Left ventricle myocardium superior (tissue), 1 donor: ENCODE measurements at regions of chr12 and their contacts with region 1.

Region 1: DNA sequence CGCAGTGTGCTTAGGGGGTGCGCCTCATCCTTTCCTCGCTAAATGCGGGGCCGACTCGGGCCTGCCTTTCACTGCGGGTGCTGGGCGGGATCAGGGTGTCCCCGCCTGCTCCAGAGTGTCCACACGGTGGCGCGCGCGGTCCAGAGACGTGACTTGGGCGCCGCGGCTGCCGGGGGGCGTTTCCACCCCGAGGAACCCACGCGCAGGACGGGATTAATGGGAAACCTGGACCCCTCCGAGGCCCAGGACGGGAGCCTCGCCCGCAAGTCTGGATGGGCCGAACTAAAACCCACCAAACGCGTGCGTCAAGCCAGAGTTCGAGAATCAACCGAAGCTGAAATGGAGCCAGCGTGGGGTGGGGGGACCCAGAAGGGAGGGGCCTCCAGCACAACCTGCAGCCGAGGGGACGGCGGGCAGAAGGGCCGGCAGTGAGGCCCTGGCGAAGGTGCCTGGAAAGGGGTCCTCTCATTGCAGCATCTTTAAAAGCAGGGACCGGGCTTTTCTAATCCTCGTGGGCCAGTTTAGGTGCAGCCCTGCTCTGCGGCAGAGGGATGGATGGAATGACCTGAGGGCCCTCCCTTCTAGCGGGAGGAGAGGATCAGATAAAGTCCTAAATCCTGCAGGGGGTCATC is 93.3 kb downstream of the NINJ2 start:
- DNase-seq: peak; percentile 96
- ATAC-seq: peak; percentile 68

Region 2: DNA sequence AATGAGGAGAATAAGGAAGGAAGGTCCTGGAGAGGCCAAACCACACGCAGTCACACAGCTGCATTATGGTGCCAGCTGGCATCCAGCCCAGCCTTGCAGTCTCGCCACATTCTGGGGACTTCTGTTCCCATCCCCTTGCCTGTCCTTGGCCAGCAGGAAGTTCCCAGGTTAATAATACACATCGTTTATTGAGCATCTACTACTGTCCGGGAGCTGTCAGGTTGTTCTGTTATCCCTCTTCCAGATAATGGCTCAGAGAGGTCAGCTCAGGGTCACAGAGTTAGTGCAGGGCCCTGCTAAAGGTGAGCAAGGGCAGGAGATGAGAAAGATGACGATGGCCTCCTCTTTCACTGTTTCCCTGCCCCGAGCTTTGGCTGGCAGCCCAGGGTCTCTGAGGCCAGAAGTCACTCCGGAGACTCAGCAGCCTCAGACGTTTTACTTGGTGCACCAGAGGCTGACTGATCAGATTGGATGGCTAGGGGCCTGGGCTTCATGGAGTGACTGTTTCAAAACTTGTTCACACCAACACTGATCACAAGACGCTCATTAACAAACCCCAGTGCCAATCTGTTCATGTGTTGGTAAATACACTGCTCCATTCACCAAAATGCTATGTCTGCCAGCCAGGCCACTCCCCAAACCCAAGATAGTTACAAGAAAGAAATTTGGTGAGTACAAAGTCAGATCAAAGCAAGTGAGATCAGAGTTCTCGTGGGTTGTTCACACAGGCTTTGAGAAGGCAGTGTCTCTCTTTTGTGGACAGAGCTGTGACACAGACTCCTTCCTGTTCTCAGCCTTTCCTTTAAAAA is 31.0 kb before region 1 on chr12:
- intact Hi-C with region 1: no loop called
- DNase-seq: peak; percentile 85
- ATAC-seq: peak; percentile 65

Region 3: GRCh38 chr12:724194-724855 is 154.4 kb after region 1 on chr12:
- intact Hi-C with region 1: no loop called
- DNase-seq: no peak
- ATAC-seq: peak; percentile 34

Region 4: DNA sequence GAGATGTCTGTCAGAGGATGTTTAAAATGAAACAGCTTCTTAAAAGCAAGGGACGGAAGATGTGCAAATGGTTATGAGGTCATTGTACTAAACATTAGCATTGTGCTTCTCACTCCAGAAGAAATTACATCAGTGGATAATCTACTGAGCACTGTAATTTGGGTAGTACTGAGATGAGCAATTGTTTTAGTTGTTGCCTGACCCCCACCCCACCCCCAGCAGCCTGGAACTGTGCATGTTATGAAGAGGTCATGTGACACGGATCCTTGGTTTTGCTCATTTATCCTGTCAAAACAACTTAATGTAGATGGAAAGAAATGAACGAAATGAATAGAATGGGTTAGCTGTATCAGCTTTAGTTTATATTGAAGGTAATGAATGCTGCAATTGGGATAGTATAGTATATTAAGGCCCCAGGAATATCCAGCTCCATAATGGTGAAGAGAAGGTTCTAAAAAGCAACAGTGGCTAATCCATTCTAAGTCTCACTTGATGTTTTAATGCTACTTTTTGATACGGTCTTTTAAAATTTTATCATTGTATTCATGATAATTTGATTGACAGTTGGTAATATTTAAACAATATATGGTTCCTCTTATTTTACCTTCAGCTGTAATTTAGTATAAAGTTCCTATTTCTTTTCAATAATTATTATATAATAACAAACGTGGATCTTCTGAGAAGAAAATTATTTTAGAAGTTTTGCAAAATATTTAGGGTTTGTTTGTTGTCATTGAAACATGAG is 240.9 kb after region 1 on chr12:
- intact Hi-C with region 1: loop called (anchors 5 kb)
- DNase-seq: no peak
- ATAC-seq: no peak